Keratinocyte (primary cell): ENCODE measurements at regions of chr3 and their contacts with region 1.

Region 1: DNA sequence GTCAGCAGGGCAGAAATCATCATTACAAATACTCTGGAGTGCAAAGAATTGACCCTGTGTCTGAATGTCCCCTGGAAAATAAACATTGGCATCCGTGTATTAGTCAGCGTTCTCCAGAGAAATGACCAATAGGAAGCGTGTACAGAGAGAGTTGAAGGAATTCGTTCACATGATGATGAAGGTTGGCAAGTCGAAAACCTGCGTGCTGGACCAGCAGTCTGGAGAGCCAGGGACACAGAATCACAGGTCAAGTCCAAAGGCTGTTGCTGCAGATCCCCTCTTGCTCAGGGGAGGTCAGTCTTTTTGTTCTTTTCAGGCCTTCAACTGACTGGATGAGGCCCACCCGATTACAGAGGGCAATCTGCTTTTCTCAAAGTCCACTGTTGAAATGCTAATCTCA is 16.6 kb downstream of the GP9 start:
- DNase-seq: no peak
- H3K4me3 ChIP-seq: no peak overlapping the region
- H3K27ac ChIP-seq: no peak overlapping the region
- H3K4me1 ChIP-seq: no peaks in the 10 kb centered on the region
- H3K27me3 ChIP-seq: no peaks in the 10 kb centered on the region
- CTCF ChIP-seq: no peak

Region 2: DNA sequence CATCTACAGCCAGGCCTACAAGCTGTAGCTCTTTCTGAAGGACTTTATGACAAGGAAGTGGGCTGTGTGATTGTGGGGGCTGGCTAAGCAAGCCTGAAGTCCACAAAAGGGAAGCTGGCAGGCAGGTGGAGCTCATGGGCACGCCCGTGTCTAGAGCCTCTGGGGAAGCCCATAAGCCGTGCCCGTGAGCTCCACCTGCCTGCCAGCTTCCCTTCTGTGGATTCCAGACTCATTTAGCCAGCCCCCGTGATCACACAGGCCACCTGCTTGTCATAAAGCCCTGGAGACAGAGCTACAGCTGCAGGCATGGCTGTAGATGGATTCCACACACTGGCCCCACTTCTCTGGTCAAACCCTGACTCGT is 60.9 kb before region 1 on chr3:
- dilution Hi-C with region 1: loop called (anchors 10 kb)
- DNase-seq: no peak
- H3K4me3 ChIP-seq: no peak overlapping the region
- H3K27ac ChIP-seq: no peak overlapping the region
- H3K4me1 ChIP-seq: no peaks in the 10 kb centered on the region
- H3K27me3 ChIP-seq: no peaks in the 10 kb centered on the region
- CTCF ChIP-seq: peak in 2 of 3 experiments; percentile 45 to 58

Region 3: DNA sequence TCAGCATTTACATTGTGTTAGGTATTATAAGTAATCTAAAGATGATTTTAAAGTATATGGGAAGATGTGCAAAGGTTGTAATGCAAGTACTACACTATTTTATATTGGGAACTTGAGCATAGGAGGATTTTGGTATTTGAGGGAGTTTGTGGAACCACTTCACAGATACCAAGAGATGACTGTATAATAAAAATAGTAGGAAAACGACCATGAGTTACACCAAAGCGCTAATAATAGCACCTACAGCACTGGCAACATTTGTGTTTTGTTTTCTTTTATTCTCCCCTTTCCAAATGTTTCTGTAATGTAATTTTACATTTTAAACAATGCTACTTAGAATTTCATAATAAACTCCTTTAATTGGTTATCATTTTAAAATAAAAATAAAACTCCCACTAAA is 96.0 kb after region 1 on chr3:
- dilution Hi-C with region 1: no loop called
- DNase-seq: no peak
- H3K4me3 ChIP-seq: no peak overlapping the region
- H3K27ac ChIP-seq: no peak overlapping the region
- H3K4me1 ChIP-seq: peaks cover 4% of the 10 kb centered on the region
- H3K27me3 ChIP-seq: no peaks in the 10 kb centered on the region
- CTCF ChIP-seq: no peak